ENCODE measurements at regions of chr15 and their contacts with region 1.

Region 1: GRCh38 chr15:65856821-65857455 is 12.4 kb upstream of the RAB11A start:
- DNase-seq: peak in 3 of 4 donors; percentile 46 to 85 (median 65)
- ATAC-seq: peak; percentile 87
- H3K4me3 ChIP-seq: no peak overlapping the region
- H3K27ac ChIP-seq: no peak overlapping the region
- H3K4me1 ChIP-seq: no peaks in the 10 kb centered on the region
- H3K27me3 ChIP-seq: no peaks in the 10 kb centered on the region
- CTCF ChIP-seq: peak; percentile 80 to 88

Region 2: DNA sequence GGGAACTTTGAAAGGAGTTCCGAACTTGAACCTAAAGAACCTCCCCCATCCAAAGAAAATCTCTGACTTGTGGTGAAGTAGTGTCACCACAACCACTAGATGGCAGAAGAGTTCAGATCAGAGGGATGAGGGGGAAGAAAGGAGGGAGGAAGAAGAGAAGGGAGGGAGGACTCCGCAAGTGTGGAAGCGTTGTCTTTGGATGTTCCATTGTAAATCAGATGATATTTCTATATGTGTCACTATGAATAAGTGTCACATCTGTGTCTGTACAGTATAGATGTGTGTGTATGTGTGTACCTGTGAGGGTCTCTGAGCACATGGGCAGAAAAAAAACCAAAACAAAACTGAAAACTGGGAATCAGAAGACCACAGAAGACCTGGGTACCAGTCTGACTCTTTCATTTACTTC is 218.3 kb before region 1 on chr15:
- intact Hi-C with region 1: loop called in 1 of 2 experiments (anchors 10 kb)
- DNase-seq: peak in 2 of 4 donors; percentile 59 to 80
- ATAC-seq: peak; percentile 93
- H3K4me3 ChIP-seq: no peak overlapping the region
- H3K27ac ChIP-seq: no peak overlapping the region
- H3K4me1 ChIP-seq: peaks cover 7 to 10% of the 10 kb centered on the region in 2 donors
- H3K27me3 ChIP-seq: no peaks in the 10 kb centered on the region
- CTCF ChIP-seq: peak; percentile 64 to 70

Region 3: GRCh38 chr15:65723876-65724275 is 133.1 kb before region 1 on chr15:
- intact Hi-C with region 1: no loop called
- DNase-seq: no peak
- ATAC-seq: no peak
- H3K4me3 ChIP-seq: no peak overlapping the region
- H3K27ac ChIP-seq: no peak overlapping the region
- H3K4me1 ChIP-seq: no peaks in the 10 kb centered on the region
- H3K27me3 ChIP-seq: no peaks in the 10 kb centered on the region
- CTCF ChIP-seq: no peak